Uterus (tissue), 4 donors: ENCODE measurements at regions of chr3 and their contacts with region 1.

Region 1: GRCh38 chr3:70951316-70951715 is 632.2 kb downstream of the FOXP1 start:
- DNase-seq: no peak
- H3K4me3 ChIP-seq: no peak overlapping the region
- H3K27ac ChIP-seq: no peak overlapping the region
- H3K4me1 ChIP-seq: peaks cover 0 to 6% of the 10 kb centered on the region in 2 donors
- H3K27me3 ChIP-seq: no peaks in the 10 kb centered on the region
- CTCF ChIP-seq: no peak
- POLR2A ChIP-seq: no peak

Region 2: DNA sequence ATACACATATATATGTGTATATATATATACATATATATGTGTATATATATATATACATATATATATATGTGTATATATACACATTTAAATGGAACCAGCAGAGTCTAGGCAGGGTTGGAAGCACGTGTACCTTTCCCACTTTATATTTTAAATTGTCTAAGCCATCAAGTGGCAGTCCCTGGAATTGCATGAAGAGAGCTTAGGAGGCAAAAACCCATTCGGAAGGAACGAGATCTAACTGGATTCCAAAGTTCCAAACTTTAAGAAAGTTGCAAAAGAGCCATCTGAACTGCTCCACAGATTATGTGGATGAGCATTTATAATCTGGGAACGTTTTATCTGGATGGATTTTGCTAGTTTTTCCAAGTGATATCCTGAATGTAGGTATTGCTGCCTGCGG is 445.7 kb after region 1 on chr3:
- intact Hi-C with region 1: loop called (anchors 10 kb)
- DNase-seq: no peak
- H3K4me3 ChIP-seq: no peak overlapping the region
- H3K27ac ChIP-seq: no peak overlapping the region
- H3K4me1 ChIP-seq: no peaks in the 10 kb centered on the region
- H3K27me3 ChIP-seq: no peaks in the 10 kb centered on the region
- CTCF ChIP-seq: peak; percentile 25 to 64 (median 50)
- POLR2A ChIP-seq: no peak